ENCODE measurements at regions of chr2 and their contacts with region 1.

Region 1: GRCh38 chr2:97697252-97698235 is 15.8 kb upstream of the ZAP70 start:
- DNase-seq: peak; percentile 97
- H3K4me3 Mint-ChIP-seq: peak overlapping the region; percentile 38
- H3K27ac Mint-ChIP-seq: peak overlapping the region; percentile 54
- H3K4me1 Mint-ChIP-seq: peaks cover 12% of the 10 kb centered on the region
- H3K27me3 Mint-ChIP-seq: peaks cover 2% of the 10 kb centered on the region

Region 2: DNA sequence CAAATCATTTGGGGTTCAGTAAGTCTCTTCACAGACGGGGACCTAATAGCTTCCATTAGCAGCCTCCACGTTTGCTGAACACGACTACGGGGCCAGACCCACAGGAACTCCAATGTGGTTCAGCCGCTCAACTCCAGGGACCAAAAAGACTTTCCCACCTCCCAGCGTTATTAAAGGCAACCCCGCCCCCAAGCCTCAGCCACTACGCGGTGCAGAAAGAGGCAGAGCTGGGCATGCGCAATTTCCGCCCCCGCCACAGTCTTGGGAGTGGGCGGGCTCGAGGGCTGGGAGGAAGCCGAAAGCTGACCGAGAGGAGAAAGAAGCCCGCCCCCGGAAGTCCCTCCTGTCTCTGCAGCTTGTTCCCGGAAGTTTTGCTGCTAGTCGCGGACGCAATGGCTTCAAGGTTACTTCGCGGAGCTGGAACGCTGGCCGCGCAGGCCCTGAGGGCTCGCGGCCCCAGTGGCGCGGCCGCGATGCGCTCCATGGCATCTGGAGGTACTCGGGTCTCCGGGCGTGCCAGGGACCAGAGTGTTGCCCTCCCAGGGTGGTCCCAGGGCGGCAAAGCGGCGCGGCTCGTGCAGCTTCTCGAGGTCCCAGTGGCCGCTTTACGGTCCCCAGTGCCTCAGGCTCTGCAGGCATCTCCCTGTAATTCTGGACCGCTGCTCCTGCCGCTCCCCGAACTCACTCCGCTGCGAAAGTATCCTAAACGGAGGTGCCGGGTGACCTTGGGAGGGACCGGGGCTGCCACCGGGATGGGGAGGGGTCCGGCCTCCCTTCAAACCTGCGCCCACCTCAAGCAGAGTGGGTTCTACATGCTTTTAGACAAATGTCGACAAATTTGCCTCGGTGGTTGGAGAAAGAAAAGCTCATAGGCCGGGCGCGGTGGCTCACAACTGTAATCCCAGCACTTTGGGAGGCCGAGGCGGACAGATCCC is 51.6 kb before region 1 on chr2 and contains the start of gene COX5B:
- intact Hi-C with region 1: loop called (anchors 5 kb)
- DNase-seq: peak; percentile 100
- H3K4me3 Mint-ChIP-seq: peak within 1 kb of the TSS; percentile 94
- H3K27ac Mint-ChIP-seq: peak within 1 kb of the TSS; percentile 96
- H3K4me1 Mint-ChIP-seq: peaks cover 26% of the 10 kb centered on the region
- H3K27me3 Mint-ChIP-seq: peaks cover 4% of the 10 kb centered on the region
- total RNA-seq, gene COX5B: 227 and 233 TPM in 2 replicates

Region 3: GRCh38 chr2:97663965-97664635 is 33.4 kb before region 1 on chr2 and contains the start of gene ACTR1B:
- intact Hi-C with region 1: loop called (anchors 1 kb)
- DNase-seq: peak; percentile 99
- H3K4me3 Mint-ChIP-seq: peak within 1 kb of the TSS; percentile 94
- H3K27ac Mint-ChIP-seq: peak within 1 kb of the TSS; percentile 98
- H3K4me1 Mint-ChIP-seq: peaks cover 30% of the 10 kb centered on the region
- H3K27me3 Mint-ChIP-seq: no peaks in the 10 kb centered on the region
- total RNA-seq, gene ACTR1B: 122 TPM in 2 replicates

Region 4: GRCh38 chr2:97747716-97748115 is 50.2 kb after region 1 on chr2:
- intact Hi-C with region 1: loop called (anchors 1 kb)
- DNase-seq: no peak
- H3K4me3 Mint-ChIP-seq: no peak overlapping the region
- H3K27ac Mint-ChIP-seq: no peak overlapping the region
- H3K4me1 Mint-ChIP-seq: peaks cover 43% of the 10 kb centered on the region
- H3K27me3 Mint-ChIP-seq: no peaks in the 10 kb centered on the region

Measured in activated CD4-positive, alpha-beta T cell treated with anti-CD3 and anti-CD28 coated beads, Interleukin-2, amount 10 ng/mL, durations not matched to agents 24 days and 14 days (primary cell).